HepG2 (cell line): ENCODE measurements at regions of chrX and their contacts with region 1.

Region 1: GRCh38 chrX:28177202-28177601 is 196.0 kb upstream of the DCAF8L1 start:
- DNase-seq: no peak
- ATAC-seq: peak; percentile 73
- H3K4me3 ChIP-seq: no peak overlapping the region
- H3K27ac ChIP-seq: no peak overlapping the region
- H3K4me1 ChIP-seq: no peaks in the 10 kb centered on the region
- H3K27me3 ChIP-seq: no peaks in the 10 kb centered on the region
- CTCF ChIP-seq: 0 out of 2 replicates have a peak, but pooled peaks have one; percentile 16
- EP300 ChIP-seq: no peak
- POLR2A ChIP-seq: no peak
- RAD21 ChIP-seq: no peak

Region 2: DNA sequence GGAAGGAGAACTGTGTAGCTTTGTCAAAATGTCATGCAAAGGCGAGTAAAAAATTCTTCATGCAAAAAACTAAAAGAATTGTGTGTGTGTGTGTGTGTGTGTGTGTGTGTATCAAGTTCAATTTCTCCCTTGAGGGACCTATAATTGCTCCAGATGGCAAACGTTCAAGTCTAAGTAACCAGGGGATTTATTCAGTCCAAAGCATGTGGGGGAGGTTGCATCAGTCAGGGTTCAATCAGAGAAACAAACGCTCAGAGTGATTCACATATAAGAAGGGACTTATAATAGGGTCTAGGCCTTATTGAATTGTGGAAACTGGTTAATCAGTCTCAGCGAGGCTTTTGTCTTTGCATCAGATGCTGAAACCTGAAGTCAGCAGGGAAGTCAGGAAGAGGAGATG is 200.9 kb before region 1 on chrX:
- CTCF ChIA-PET with region 1: no interaction called
- POLR2A ChIA-PET with region 1: no interaction called
- in situ Hi-C with region 1: no loop called
- intact Hi-C with region 1: no loop called
- DNase-seq: no peak
- ATAC-seq: no peak
- H3K4me3 ChIP-seq: no peak overlapping the region
- H3K27ac ChIP-seq: no peak overlapping the region
- H3K4me1 ChIP-seq: no peaks in the 10 kb centered on the region
- H3K27me3 ChIP-seq: no peaks in the 10 kb centered on the region
- CTCF ChIP-seq: no peak
- EP300 ChIP-seq: no peak
- POLR2A ChIP-seq: no peak
- RAD21 ChIP-seq: no peak

Region 3: DNA sequence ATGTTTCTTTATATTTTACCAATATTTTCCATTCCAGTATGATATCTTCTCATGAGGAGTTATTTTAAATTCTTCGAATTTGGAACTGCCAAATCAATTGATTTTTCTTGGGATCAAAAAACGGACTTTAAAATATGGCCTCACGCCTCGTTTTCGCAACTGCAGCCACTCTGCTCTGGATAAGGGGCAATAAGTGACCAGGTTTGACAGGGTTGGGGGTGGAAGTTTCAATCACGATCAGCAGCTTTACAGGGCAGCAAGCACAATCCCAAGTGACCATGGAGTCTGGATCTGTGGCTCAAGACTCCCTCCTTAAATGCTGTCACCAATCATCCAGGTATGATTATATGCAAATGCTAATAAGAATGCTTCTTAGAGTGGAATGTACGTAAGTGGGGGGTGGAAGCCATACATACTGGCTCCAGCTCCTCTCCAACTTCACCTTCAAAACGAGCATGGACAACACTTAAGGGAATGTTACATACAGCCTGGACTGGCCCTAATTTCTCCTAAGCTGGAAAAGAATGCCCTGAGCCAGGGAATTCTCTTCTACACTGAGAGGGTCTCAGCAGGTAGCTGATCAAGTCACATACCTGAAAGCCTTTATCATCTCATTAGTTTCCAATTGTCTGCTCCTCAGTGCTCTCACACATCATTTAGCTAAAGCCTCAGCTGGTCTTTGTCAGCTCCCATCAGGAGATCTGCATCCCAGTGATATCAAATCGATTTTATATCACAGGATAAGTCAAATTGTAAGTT is 19.0 kb before region 1 on chrX:
- CTCF ChIA-PET with region 1: no interaction called
- POLR2A ChIA-PET with region 1: no interaction called
- in situ Hi-C with region 1: no loop called
- intact Hi-C with region 1: no loop called
- DNase-seq: no peak
- ATAC-seq: no peak
- H3K4me3 ChIP-seq: no peak overlapping the region
- H3K27ac ChIP-seq: no peak overlapping the region
- H3K4me1 ChIP-seq: no peaks in the 10 kb centered on the region
- H3K27me3 ChIP-seq: no peaks in the 10 kb centered on the region
- CTCF ChIP-seq: no peak
- EP300 ChIP-seq: no peak
- POLR2A ChIP-seq: no peak
- RAD21 ChIP-seq: no peak

Region 4: GRCh38 chrX:29090811-29091210 is 913.6 kb after region 1 on chrX:
- CTCF ChIA-PET with region 1: no interaction called
- POLR2A ChIA-PET with region 1: no interaction called
- in situ Hi-C with region 1: no loop called
- intact Hi-C with region 1: loop called (anchors 5 kb)
- DNase-seq: no peak
- ATAC-seq: no peak
- H3K4me3 ChIP-seq: no peak overlapping the region
- H3K27ac ChIP-seq: no peak overlapping the region
- H3K4me1 ChIP-seq: no peaks in the 10 kb centered on the region
- H3K27me3 ChIP-seq: no peaks in the 10 kb centered on the region
- CTCF ChIP-seq: 0 out of 2 replicates have a peak, but pooled peaks have one; percentile 6
- EP300 ChIP-seq: no peak
- POLR2A ChIP-seq: no peak
- RAD21 ChIP-seq: no peak

Region 5: GRCh38 chrX:29231800-29232199 is 1054.6 kb after region 1 on chrX:
- CTCF ChIA-PET with region 1: no interaction called
- POLR2A ChIA-PET with region 1: no interaction called
- in situ Hi-C with region 1: no loop called
- intact Hi-C with region 1: loop called (anchors 10 kb)
- DNase-seq: no peak
- ATAC-seq: no peak
- H3K4me3 ChIP-seq: no peak overlapping the region
- H3K27ac ChIP-seq: no peak overlapping the region
- H3K4me1 ChIP-seq: no peaks in the 10 kb centered on the region
- H3K27me3 ChIP-seq: no peaks in the 10 kb centered on the region
- CTCF ChIP-seq: no peak
- EP300 ChIP-seq: no peak
- POLR2A ChIP-seq: no peak
- RAD21 ChIP-seq: no peak